Natural killer cell (primary cell): ENCODE measurements at regions of chr20 and their contacts with region 1.

Region 1: DNA sequence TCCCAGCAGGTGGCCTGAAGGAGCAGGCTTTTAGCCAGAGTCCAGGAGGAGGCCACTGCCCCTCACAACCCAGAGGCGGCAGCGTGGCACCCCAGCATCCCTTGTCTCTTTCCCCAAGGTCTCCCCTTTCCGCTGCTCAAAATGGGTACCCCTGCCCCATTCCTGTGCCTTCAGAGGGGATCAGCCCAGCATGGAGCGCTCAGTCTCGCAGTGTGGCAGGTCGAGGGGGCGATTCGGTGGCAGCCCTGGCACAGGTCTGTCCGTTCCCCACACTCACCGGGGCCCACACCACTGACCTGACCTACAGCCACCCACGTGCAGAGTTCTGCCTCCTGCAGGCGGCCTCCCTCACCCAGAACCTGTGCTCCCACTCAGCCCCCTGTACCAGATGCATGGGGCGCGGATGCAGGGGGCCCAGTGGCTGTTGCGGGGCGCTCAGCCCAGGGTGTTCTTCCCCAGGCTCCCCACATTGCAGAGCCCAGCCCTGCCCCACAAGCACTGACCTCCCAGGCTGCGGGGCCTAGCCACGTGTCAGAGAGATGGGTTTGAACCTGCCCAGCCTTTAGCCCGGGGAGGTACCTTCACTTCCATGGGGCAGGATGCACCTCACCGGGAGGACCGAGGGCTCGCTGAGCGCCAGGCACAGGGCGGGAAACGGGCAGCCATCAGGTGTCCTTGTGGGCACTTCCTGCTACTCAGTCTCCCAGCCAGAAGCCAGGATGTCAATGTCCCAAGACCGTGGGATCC is 41.8 kb downstream of the DSTN start:
- DNase-seq: no peak
- ATAC-seq: peak in 1 of 3 donors; percentile 2
- H3K4me3 ChIP-seq: no peak overlapping the region
- H3K4me3 Mint-ChIP-seq: peak overlapping the region; percentile 13
- H3K27ac ChIP-seq: peak overlapping the region; percentile 94
- H3K27ac Mint-ChIP-seq: peak overlapping the region; percentile 98
- H3K4me1 ChIP-seq: peaks cover 67% of the 10 kb centered on the region
- H3K4me1 Mint-ChIP-seq: peaks cover 41 to 59% of the 10 kb centered on the region in 2 donors
- H3K27me3 ChIP-seq: no peaks in the 10 kb centered on the region
- H3K27me3 Mint-ChIP-seq: no peaks in the 10 kb centered on the region
- CTCF ChIP-seq: peak; percentile 1

Region 2: DNA sequence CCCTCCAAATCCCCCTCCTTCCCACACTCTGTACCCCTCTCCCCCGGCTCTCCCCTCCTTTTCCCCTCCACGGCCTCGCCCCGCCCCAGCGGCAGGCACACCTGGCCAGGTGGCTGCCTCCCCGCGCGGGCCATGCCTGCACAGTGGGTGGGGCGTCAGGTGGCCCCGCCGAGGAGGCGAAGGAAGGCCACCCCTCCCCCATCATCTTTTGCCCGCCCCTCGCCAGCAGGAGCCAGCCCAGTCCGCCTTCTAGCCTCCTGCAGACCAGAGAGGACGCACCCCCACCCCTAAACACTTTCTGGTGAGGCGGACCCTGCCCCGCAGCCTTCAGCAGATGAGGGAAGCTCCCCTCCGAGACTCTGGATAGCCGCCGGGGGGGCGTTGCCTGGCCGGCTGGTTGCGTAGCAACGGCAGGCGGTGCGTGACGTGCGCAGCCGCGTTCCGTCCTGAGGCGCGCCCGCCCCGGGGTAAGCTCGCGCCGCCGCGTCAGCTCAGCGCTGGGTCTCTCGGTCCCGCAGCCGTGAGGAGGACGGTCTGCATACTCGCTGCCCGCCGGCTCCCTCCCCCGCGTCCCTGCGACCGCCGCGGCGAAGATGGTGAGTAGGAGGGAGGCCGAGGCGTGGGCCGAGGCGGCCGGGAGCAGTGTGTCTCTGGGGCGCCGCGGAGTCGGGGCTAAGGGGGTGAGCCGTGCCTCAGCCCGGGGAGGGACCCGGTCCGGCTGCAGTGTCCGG is 41.9 kb before region 1 on chr20 and contains the start of gene DSTN:
- intact Hi-C with region 1: loop called (anchors 2 kb)
- DNase-seq: peak; percentile 86 to 94
- ATAC-seq: peak; percentile 88 to 94 (median 90)
- H3K4me3 ChIP-seq: peak within 1 kb of the TSS; percentile 84
- H3K4me3 Mint-ChIP-seq: peak within 1 kb of the TSS; percentile 99
- H3K27ac ChIP-seq: peak within 1 kb of the TSS; percentile 78
- H3K27ac Mint-ChIP-seq: peak within 1 kb of the TSS; percentile 92 to 97
- H3K4me1 ChIP-seq: peaks cover 11% of the 10 kb centered on the region
- H3K4me1 Mint-ChIP-seq: peaks cover 35% of the 10 kb centered on the region in 2 donors
- H3K27me3 ChIP-seq: peaks cover 9% of the 10 kb centered on the region
- H3K27me3 Mint-ChIP-seq: peaks cover 0 to 5% of the 10 kb centered on the region in 2 donors
- CTCF ChIP-seq: no peak
- total RNA-seq, gene DSTN: 47.5 to 73.5 (median 70.0) TPM

Region 3: GRCh38 chr20:17589161-17589834 is 22.4 kb before region 1 on chr20:
- intact Hi-C with region 1: no loop called
- DNase-seq: no peak
- ATAC-seq: no peak
- H3K4me3 ChIP-seq: no peak overlapping the region
- H3K4me3 Mint-ChIP-seq: no peak overlapping the region
- H3K27ac ChIP-seq: no peak overlapping the region
- H3K27ac Mint-ChIP-seq: no peak overlapping the region
- H3K4me1 ChIP-seq: no peaks in the 10 kb centered on the region
- H3K4me1 Mint-ChIP-seq: peaks cover 25 to 44% of the 10 kb centered on the region in 2 donors
- H3K27me3 ChIP-seq: no peaks in the 10 kb centered on the region
- H3K27me3 Mint-ChIP-seq: no peaks in the 10 kb centered on the region
- CTCF ChIP-seq: no peak